ENCODE measurements at regions of chr1 and their contacts with region 1.

Region 1: DNA sequence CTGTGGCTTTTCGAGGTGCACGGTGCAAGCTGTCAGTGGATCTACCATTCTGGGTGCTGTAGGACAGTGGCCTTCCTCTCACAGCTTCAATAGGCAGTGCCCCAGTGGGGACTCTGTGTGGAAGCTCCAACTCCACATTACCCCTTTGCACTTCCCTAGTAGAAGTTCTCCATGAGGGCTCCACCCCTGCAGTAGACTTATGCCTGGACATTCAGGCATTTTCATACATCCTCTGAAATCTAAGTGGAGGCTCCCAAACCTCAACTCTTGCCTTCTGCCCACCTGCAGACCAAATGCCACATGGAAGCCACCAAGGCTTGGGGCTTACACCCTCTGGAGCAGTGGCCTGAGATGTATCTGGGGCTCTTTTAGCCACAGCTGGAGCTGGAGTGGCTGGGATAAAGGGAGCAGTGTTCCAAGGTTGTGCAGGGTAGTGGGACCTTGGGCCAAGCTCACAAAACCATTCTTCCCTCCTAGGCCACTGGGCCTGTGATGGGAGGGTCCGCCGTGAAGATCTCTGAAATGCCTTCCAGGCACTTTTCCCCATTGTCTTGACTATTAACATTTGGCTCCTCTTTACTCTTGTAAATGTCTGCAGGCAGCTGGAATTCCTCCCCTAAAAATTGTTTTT is 18.0 kb upstream of the RNF2 start:
- DNase-seq: no peak
- ATAC-seq: no peak
- H3K4me3 ChIP-seq: no peak overlapping the region
- H3K4me3 Mint-ChIP-seq: no peak overlapping the region
- H3K27ac ChIP-seq: no peak overlapping the region
- H3K27ac Mint-ChIP-seq: no peak overlapping the region
- H3K4me1 ChIP-seq: no peaks in the 10 kb centered on the region
- H3K4me1 Mint-ChIP-seq: no peaks in the 10 kb centered on the region
- H3K27me3 ChIP-seq: peaks cover 0 to 3% of the 10 kb centered on the region in 2 experiments
- H3K27me3 Mint-ChIP-seq: peaks cover 23% of the 10 kb centered on the region
- CTCF ChIP-seq: no peak

Region 2: GRCh38 chr1:184563308-184563707 is 464.1 kb before region 1 on chr1:
- CTCF ChIA-PET with region 1: no interaction called
- POLR2A ChIA-PET with region 1: no interaction called
- intact Hi-C with region 1: loop called in 1 of 2 experiments (anchors 5 kb)
- DNase-seq: no peak
- ATAC-seq: no peak
- H3K4me3 ChIP-seq: no peak overlapping the region
- H3K4me3 Mint-ChIP-seq: no peak overlapping the region
- H3K27ac ChIP-seq: no peak overlapping the region
- H3K27ac Mint-ChIP-seq: no peak overlapping the region
- H3K4me1 ChIP-seq: no peaks in the 10 kb centered on the region
- H3K4me1 Mint-ChIP-seq: no peaks in the 10 kb centered on the region
- H3K27me3 ChIP-seq: no peaks in the 10 kb centered on the region
- H3K27me3 Mint-ChIP-seq: peaks cover 5% of the 10 kb centered on the region
- CTCF ChIP-seq: no peak

Measured in CD4-positive, alpha-beta T cell (primary cell).